ENCODE measurements at regions of chr10 and their contacts with region 1.

Region 1: DNA sequence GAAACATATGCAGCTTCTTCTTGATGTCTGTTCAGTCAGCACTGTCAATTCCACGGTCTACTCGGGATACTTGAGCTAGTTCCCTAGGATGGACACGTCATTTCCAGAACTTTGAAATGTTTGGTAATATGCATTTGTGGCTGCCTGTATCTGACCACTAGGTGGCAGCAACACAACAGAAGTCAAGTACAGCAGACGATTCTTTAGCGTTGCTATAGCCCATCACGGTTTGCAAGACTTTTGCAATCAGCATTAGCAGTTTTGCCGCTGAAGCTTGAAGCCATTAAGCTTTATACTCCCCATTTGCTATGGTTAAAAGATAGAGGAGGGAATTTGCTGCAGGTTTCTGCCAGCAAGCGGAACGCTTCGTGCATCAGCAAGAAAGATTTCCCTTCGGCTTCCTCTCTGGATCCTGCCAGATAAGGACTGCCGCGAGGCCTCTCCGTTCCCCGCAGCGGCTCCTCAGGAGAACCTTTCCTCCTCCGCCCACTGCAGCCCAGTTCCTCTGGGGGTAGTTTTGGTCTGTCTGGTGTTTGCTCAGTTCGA is 63.5 kb downstream of the ABCC2 start:
- ATAC-seq: peak; percentile 84 to 98 (median 96)
- H3K4me3 ChIP-seq: peak overlapping the region in 3 of 5 donors; percentile 7 to 19 (median 13)
- H3K27ac ChIP-seq: no peak overlapping the region
- H3K4me1 ChIP-seq: peaks cover 3 to 6% of the 10 kb centered on the region in 2 donors

Region 2: DNA sequence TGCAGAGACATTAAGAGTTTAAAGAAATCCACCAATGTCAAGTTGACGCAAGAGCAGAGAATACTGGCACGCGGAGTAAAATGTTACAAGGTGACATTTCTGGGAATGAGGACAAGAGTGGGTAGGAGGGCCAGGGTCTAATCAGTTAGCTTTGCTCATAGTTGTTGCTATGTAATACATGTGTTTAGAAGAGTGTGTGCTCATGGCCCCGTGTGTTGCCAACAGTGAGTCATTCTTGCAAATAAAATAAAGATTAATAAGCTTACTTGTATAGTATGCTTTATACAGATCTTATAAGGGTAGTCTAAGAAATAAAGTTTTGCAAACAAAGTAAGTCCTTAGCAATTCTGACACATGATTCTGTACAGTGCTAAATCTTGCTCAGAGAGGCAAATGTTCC is 99.4 kb after region 1 on chr10:
- in situ Hi-C with region 1: no loop called
- ATAC-seq: peak in 6 of 8 experiments; percentile 28 to 97 (median 80)
- H3K4me3 ChIP-seq: no peak overlapping the region
- H3K27ac ChIP-seq: no peak overlapping the region
- H3K4me1 ChIP-seq: no peaks in the 10 kb centered on the region

Region 3: GRCh38 chr10:100046021-100046486 is 200.1 kb after region 1 on chr10:
- in situ Hi-C with region 1: loop called in 4 of 9 experiments (anchors 10 to 25 kb)
- ATAC-seq: peak; percentile 58 to 93 (median 81)
- H3K4me3 ChIP-seq: no peak overlapping the region
- H3K27ac ChIP-seq: no peak overlapping the region
- H3K4me1 ChIP-seq: no peaks in the 10 kb centered on the region

Region 4: DNA sequence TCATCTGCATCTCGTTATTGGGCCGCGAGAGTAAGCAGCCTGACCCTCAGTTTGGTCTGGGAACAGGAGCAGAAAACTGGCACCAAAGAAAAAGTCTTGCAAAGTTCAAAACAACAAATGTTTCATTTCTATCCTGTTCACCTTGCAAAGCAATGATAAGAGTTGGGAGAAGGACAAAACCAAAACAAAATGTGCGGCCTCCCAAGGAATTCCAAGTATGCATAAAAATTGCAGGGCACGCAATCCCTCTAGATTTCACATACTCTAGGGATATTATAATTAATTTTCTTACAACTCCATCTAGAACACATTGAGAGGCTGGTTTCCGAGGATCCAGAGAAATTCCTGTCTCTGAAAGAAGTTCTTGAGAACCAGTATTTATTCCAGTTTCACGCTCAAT is 363.4 kb after region 1 on chr10:
- in situ Hi-C with region 1: loop called in 1 of 9 experiments (anchors 25 kb)
- ATAC-seq: peak in 2 of 8 experiments; percentile 41 to 72
- H3K4me3 ChIP-seq: no peak overlapping the region
- H3K27ac ChIP-seq: no peak overlapping the region
- H3K4me1 ChIP-seq: no peaks in the 10 kb centered on the region